Thyroid gland (tissue), 4 donors: ENCODE measurements at regions of chr1 and their contacts with region 1.

Region 1: GRCh38 chr1:26321315-26322041 is 3.7 kb downstream of the CD52 start:
- DNase-seq: peak; percentile 89 to 93
- H3K4me3 ChIP-seq: no peak overlapping the region
- H3K27ac ChIP-seq: no peak overlapping the region
- H3K4me1 ChIP-seq: peaks cover 0 to 8% of the 10 kb centered on the region in 2 donors
- H3K27me3 ChIP-seq: no peaks in the 10 kb centered on the region
- CTCF ChIP-seq: peak; percentile 69 to 94 (median 90)
- POLR2A ChIP-seq: no peak

Region 2: GRCh38 chr1:26279456-26280332 is 41.8 kb before region 1 on chr1 and contains the start of gene SH3BGRL3:
- intact Hi-C with region 1: loop called (anchors 5 kb)
- DNase-seq: peak; percentile 88
- H3K4me3 ChIP-seq: peak within 1 kb of the TSS; percentile 77 to 78 (median 78)
- H3K27ac ChIP-seq: peak within 1 kb of the TSS; percentile 85 to 96 (median 89)
- H3K4me1 ChIP-seq: peaks cover 23 to 67% of the 10 kb centered on the region in 2 donors
- H3K27me3 ChIP-seq: no peaks in the 10 kb centered on the region
- CTCF ChIP-seq: peak in 3 of 6 experiments; percentile 19 to 45 (median 32)
- POLR2A ChIP-seq: peak; percentile 75 to 89
- total RNA-seq, gene SH3BGRL3: 18.8 to 58.2 (median 37.4) TPM